ENCODE measurements at regions of chr12 and their contacts with region 1.

Region 1: GRCh38 chr12:43444940-43445564 is 107.0 kb downstream of the ADAMTS20 start:
- DNase-seq: peak; percentile 75
- ATAC-seq: no peak
- H3K4me3 Mint-ChIP-seq: no peak overlapping the region
- H3K27ac Mint-ChIP-seq: no peak overlapping the region
- H3K4me1 Mint-ChIP-seq: no peaks in the 10 kb centered on the region
- H3K27me3 Mint-ChIP-seq: peaks cover 8% of the 10 kb centered on the region

Region 2: DNA sequence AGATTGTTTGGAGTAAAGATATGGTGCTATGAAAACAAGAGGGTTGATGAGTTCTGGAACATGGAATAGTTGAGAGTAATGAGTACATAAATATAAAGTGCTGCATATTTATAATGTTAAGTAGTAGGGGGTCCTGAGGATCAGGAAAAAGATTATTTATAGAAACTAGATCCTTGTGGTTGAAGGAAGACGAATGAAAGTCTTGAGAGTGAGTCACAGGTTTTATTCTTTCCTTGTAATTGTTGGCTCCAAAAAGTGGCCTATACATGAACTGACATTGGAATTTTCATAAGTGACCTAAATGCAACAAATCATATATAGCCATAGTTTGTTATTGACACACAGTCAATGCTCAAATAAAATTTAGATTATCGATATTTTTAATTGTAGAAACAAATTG is 415.1 kb before region 1 on chr12:
- CTCF ChIA-PET with region 1: no interaction called
- POLR2A ChIA-PET with region 1: no interaction called
- intact Hi-C with region 1: no loop called
- DNase-seq: no peak
- ATAC-seq: no peak
- H3K4me3 Mint-ChIP-seq: no peak overlapping the region
- H3K27ac Mint-ChIP-seq: no peak overlapping the region
- H3K4me1 Mint-ChIP-seq: no peaks in the 10 kb centered on the region
- H3K27me3 Mint-ChIP-seq: no peaks in the 10 kb centered on the region

Region 3: GRCh38 chr12:43428088-43428600 is 16.9 kb before region 1 on chr12:
- CTCF ChIA-PET with region 1: interaction called, 20 read pairs
- POLR2A ChIA-PET with region 1: no interaction called
- intact Hi-C with region 1: no loop called
- DNase-seq: no peak
- ATAC-seq: no peak
- H3K4me3 Mint-ChIP-seq: no peak overlapping the region
- H3K27ac Mint-ChIP-seq: no peak overlapping the region
- H3K4me1 Mint-ChIP-seq: no peaks in the 10 kb centered on the region
- H3K27me3 Mint-ChIP-seq: no peaks in the 10 kb centered on the region

Region 4: GRCh38 chr12:43434614-43435013 is 10.4 kb before region 1 on chr12:
- CTCF ChIA-PET with region 1: interaction called, 20 read pairs
- POLR2A ChIA-PET with region 1: no interaction called
- intact Hi-C with region 1: no loop called
- DNase-seq: no peak
- ATAC-seq: no peak
- H3K4me3 Mint-ChIP-seq: no peak overlapping the region
- H3K27ac Mint-ChIP-seq: no peak overlapping the region
- H3K4me1 Mint-ChIP-seq: no peaks in the 10 kb centered on the region
- H3K27me3 Mint-ChIP-seq: no peaks in the 10 kb centered on the region

Region 5: GRCh38 chr12:43676183-43676813 is 231.2 kb after region 1 on chr12:
- CTCF ChIA-PET with region 1: interaction called, 3 read pairs
- POLR2A ChIA-PET with region 1: no interaction called
- intact Hi-C with region 1: loop called (anchors 5 to 10 kb)
- DNase-seq: peak; percentile 42
- ATAC-seq: peak; percentile 66
- H3K4me3 Mint-ChIP-seq: no peak overlapping the region
- H3K27ac Mint-ChIP-seq: no peak overlapping the region
- H3K4me1 Mint-ChIP-seq: no peaks in the 10 kb centered on the region
- H3K27me3 Mint-ChIP-seq: peaks cover 13% of the 10 kb centered on the region

Region 6: GRCh38 chr12:43728117-43728516 is 283.1 kb after region 1 on chr12:
- CTCF ChIA-PET with region 1: interaction called, 3 read pairs
- POLR2A ChIA-PET with region 1: no interaction called
- intact Hi-C with region 1: loop called (anchors 2 kb)
- DNase-seq: no peak
- ATAC-seq: no peak
- H3K4me3 Mint-ChIP-seq: no peak overlapping the region
- H3K27ac Mint-ChIP-seq: no peak overlapping the region
- H3K4me1 Mint-ChIP-seq: peaks cover 14% of the 10 kb centered on the region
- H3K27me3 Mint-ChIP-seq: no peaks in the 10 kb centered on the region

Region 7: GRCh38 chr12:43882578-43883178 is 437.6 kb after region 1 on chr12:
- CTCF ChIA-PET with region 1: interaction called, 29 read pairs
- POLR2A ChIA-PET with region 1: no interaction called
- intact Hi-C with region 1: loop called (anchors 1 to 2 kb)
- DNase-seq: peak; percentile 27
- ATAC-seq: peak; percentile 65
- H3K4me3 Mint-ChIP-seq: no peak overlapping the region
- H3K27ac Mint-ChIP-seq: no peak overlapping the region
- H3K4me1 Mint-ChIP-seq: no peaks in the 10 kb centered on the region
- H3K27me3 Mint-ChIP-seq: no peaks in the 10 kb centered on the region